ENCODE measurements at regions of chr19 and their contacts with region 1.

Region 1: GRCh38 chr19:1113033-1113985 is 9.5 kb downstream of the GPX4 start:
- DNase-seq: peak; percentile 75 to 83 (median 77)
- H3K4me3 ChIP-seq: no peak overlapping the region
- H3K4me3 Mint-ChIP-seq: no peak overlapping the region
- H3K27ac ChIP-seq: peak overlapping the region; percentile 35
- H3K27ac Mint-ChIP-seq: peak overlapping the region in 4 of 7 donors; percentile 24 to 53 (median 42)
- H3K4me1 ChIP-seq: peaks cover 6% of the 10 kb centered on the region
- H3K4me1 Mint-ChIP-seq: no peaks in the 10 kb centered on the region
- H3K27me3 ChIP-seq: no peaks in the 10 kb centered on the region
- H3K27me3 Mint-ChIP-seq: no peaks in the 10 kb centered on the region

Region 2: DNA sequence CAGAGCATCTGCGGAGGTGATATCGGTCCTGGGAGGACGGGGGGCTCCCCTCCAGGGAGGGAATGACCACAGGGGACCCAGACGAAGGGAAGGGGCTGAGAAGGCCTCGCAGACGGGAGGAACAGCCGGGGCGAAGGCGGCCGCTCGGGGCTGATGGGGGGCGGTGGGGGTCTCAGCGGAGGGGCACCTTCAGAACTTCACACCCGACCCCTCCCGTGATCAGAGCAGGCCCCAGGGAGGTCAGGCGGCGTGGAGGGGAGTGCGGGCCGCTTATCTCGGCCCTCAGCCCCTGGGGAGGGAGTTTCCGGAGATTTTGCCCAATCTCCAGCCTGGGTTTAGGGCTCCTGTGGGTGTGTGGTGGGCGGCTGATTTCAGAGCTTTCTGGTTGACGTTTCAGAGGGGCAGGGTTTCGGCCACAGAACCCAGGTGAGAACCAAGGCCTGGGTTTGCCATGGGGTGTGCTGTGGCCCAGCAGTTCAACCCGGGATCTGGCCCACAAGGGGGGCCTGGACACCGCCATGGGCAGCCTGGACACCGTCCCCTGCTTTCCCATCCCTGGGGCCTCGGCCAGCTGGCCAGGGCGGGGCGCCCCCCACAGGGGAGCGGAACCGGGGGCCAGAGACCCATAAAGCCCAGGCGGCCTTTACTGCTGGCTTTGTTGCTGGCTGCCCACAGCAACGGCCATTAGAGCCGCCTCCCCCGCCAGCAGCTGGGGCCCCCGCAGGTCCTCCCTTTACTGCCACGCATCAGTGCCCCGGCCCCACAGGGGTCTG is 158.5 kb before region 1 on chr19:
- CTCF ChIA-PET with region 1: no interaction called
- POLR2A ChIA-PET with region 1: no interaction called
- intact Hi-C with region 1: no loop called
- DNase-seq: peak in 1 of 5 donors; percentile 5
- H3K4me3 ChIP-seq: no peak overlapping the region
- H3K4me3 Mint-ChIP-seq: no peak overlapping the region
- H3K27ac ChIP-seq: no peak overlapping the region
- H3K27ac Mint-ChIP-seq: no peak overlapping the region
- H3K4me1 ChIP-seq: peaks cover 15% of the 10 kb centered on the region
- H3K4me1 Mint-ChIP-seq: peaks cover 0 to 10% (median 3%) of the 10 kb centered on the region in 4 donors
- H3K27me3 ChIP-seq: no peaks in the 10 kb centered on the region
- H3K27me3 Mint-ChIP-seq: no peaks in the 10 kb centered on the region

Region 3: GRCh38 chr19:1087813-1088415 is 25.4 kb before region 1 on chr19:
- CTCF ChIA-PET with region 1: no interaction called
- POLR2A ChIA-PET with region 1: interaction called, 3,893 read pairs
- intact Hi-C with region 1: no loop called
- DNase-seq: peak; percentile 59 to 78 (median 65)
- H3K4me3 ChIP-seq: no peak overlapping the region
- H3K4me3 Mint-ChIP-seq: peak overlapping the region in 5 of 8 donors; percentile 25 to 82 (median 69)
- H3K27ac ChIP-seq: peak overlapping the region; percentile 74
- H3K27ac Mint-ChIP-seq: peak overlapping the region; percentile 72 to 97 (median 93)
- H3K4me1 ChIP-seq: peaks cover 64% of the 10 kb centered on the region
- H3K4me1 Mint-ChIP-seq: peaks cover 14 to 67% (median 32%) of the 10 kb centered on the region in 4 donors
- H3K27me3 ChIP-seq: no peaks in the 10 kb centered on the region
- H3K27me3 Mint-ChIP-seq: no peaks in the 10 kb centered on the region

Region 4: GRCh38 chr19:1560286-1560882 is 447.1 kb after region 1 on chr19:
- CTCF ChIA-PET with region 1: no interaction called
- POLR2A ChIA-PET with region 1: no interaction called
- intact Hi-C with region 1: no loop called
- DNase-seq: no peak
- H3K4me3 ChIP-seq: no peak overlapping the region
- H3K4me3 Mint-ChIP-seq: no peak overlapping the region
- H3K27ac ChIP-seq: no peak overlapping the region
- H3K27ac Mint-ChIP-seq: no peak overlapping the region
- H3K4me1 ChIP-seq: no peaks in the 10 kb centered on the region
- H3K4me1 Mint-ChIP-seq: no peaks in the 10 kb centered on the region
- H3K27me3 ChIP-seq: no peaks in the 10 kb centered on the region
- H3K27me3 Mint-ChIP-seq: no peaks in the 10 kb centered on the region